Activated T-helper 1 cell treated with anti-CD3 and anti-CD28 coated beads, Interleukin-12 subunit alpha, Interleukin-12 subunit beta, Interleukin-2, Interleukin-4 antibody, amounts not matched to agents 30 ng/mL and 10 ng/mL and 1 ng/mL, durations not matched to agents 14 hours and 24 hours and 36 hours (primary cell): ENCODE measurements at regions of chr2 and their contacts with region 1.

Region 1: GRCh38 chr2:144516981-144517865 is 2.7 kb downstream of the ZEB2 start:
- DNase-seq: peak; percentile 44
- H3K4me3 Mint-ChIP-seq: no peak overlapping the region
- H3K27ac Mint-ChIP-seq: peak overlapping the region; percentile 100
- H3K4me1 Mint-ChIP-seq: peaks cover 25% of the 10 kb centered on the region
- H3K27me3 Mint-ChIP-seq: peaks cover 43% of the 10 kb centered on the region

Region 2: DNA sequence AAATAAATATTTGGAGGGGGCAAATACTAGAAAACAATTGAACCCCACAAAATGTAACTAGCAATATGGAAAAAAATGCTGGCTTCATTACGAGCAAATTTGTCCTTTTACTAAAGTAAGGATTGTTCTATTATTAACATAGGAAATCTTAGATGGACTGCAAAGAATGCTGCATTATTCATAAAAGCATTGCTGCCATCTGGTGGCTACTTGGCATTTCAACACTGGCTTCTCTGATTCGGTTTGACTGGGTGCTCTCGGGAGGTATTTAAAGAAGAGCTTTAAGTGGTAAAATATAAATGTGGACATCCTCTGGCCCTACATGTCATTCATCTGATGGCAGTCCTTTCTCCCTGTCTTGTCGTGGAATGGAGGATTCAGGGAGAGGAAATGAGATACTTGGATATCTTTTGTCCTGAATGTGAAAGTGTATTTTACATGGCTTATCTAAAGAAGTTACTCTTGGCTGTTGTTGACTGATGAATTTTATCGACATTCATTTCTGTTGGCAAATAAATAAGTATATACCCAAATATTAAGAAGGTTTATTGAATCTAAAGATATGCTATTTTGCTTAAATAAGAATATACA is 1257.8 kb before region 1 on chr2:
- intact Hi-C with region 1: loop called (anchors 5 kb)
- DNase-seq: peak; percentile 64
- H3K4me3 Mint-ChIP-seq: peak overlapping the region; percentile 78
- H3K27ac Mint-ChIP-seq: peak overlapping the region; percentile 97
- H3K4me1 Mint-ChIP-seq: peaks cover 85% of the 10 kb centered on the region
- H3K27me3 Mint-ChIP-seq: no peaks in the 10 kb centered on the region

Region 3: DNA sequence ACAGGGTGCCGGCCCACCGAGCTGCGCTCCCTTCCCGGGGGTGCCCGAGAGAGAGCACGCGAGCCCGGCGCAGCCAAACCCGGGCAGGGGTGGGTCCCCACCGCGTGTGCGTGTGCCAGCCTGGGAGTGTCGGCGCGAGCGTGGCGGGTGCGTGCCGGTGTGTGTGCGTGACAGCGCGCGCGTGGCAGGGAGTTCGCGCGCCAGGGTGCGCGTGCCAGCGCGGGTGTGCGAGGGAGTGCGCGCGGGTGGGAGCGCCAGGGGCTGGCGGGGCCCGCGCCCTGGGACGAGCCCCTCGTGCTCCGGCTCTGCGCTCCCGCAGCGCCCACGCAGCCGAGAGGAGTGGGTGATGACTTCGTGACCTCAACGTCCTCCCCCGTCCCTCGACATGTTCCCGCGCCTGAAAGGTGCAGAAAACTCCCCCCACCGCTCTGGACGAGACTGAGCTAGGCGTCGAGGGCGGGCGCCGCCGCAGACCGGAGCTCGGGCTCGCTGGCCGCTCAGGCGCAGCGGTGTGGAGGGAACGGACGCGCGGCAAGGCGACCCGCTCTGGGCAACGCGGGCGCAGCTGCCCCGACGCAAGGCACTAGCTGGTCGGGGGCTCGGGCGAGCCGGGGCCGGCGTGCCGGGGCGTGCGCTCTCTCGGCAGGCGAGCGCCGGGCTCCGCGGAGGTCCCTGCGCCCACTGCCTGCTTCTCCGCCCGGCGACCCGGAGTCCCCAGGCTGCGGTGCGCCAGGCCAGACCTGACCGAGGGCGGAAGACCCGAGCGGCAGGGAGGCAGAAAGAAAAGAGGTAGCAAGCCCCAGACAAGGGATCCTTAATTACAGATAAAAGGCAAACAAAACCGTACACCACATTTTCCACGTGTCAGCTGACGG is 580.1 kb before region 1 on chr2:
- intact Hi-C with region 1: loop called (anchors 2 kb)
- DNase-seq: no peak
- H3K4me3 Mint-ChIP-seq: peak overlapping the region; percentile 70
- H3K27ac Mint-ChIP-seq: no peak overlapping the region
- H3K4me1 Mint-ChIP-seq: peaks cover 14% of the 10 kb centered on the region
- H3K27me3 Mint-ChIP-seq: peaks cover 68% of the 10 kb centered on the region

Region 4: DNA sequence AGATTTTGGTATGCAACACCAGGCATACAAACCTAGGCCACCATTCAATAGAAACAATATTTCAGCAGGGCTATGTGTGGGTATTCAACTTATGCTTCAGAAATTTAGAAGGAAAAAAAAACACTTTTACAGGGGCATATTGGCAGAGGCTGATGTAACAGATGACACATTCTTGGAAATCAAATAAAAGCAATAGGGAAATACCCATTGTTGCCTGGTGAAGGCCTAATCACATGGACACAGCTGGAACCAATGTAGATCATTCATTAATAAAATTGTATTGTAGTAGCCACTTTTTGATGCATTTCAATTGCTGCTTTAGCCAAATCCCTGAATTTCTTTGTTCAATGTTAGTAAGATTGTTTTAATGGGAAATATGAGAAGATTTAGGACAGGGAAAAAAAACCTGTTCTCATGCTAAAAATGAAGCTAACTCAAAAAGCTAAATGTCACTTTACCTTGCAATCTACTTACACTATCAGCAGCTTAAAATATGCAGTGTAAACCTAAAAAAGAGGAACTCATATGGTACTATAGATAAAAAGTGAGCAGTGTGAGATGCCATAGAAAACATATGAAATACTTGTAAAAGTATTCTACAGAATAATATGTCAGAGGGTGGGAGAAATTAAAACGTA is 286.7 kb before region 1 on chr2:
- intact Hi-C with region 1: no loop called
- DNase-seq: no peak
- H3K4me3 Mint-ChIP-seq: no peak overlapping the region
- H3K27ac Mint-ChIP-seq: no peak overlapping the region
- H3K4me1 Mint-ChIP-seq: peaks cover 58% of the 10 kb centered on the region
- H3K27me3 Mint-ChIP-seq: no peaks in the 10 kb centered on the region

Region 5: GRCh38 chr2:144332356-144333142 is 184.7 kb before region 1 on chr2:
- intact Hi-C with region 1: loop called (anchors 1 kb)
- DNase-seq: peak; percentile 91
- H3K4me3 Mint-ChIP-seq: peak overlapping the region; percentile 85
- H3K27ac Mint-ChIP-seq: peak overlapping the region; percentile 98
- H3K4me1 Mint-ChIP-seq: peaks cover 48% of the 10 kb centered on the region
- H3K27me3 Mint-ChIP-seq: no peaks in the 10 kb centered on the region

Region 6: DNA sequence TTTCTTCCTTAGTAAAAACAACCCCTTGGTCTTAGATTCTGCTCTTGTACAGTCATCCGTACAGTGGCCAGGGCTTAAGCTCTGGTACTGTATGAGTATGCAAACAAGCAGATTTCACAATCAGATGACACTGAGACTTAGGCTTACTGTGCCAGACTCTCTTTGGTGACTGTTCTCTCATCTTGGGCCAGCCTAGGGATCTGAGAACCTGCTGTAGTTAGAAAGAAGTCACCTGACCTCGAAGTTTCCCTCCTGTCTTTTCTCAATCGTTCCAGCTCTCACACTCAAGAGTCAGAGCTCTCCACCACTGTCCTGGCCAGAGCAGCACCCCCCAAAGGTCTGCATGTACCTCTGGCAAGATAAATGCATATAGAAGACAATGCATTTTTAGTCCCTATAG is 60.5 kb before region 1 on chr2:
- intact Hi-C with region 1: loop called (anchors 1 kb)
- DNase-seq: no peak
- H3K4me3 Mint-ChIP-seq: no peak overlapping the region
- H3K27ac Mint-ChIP-seq: no peak overlapping the region
- H3K4me1 Mint-ChIP-seq: peaks cover 78% of the 10 kb centered on the region
- H3K27me3 Mint-ChIP-seq: peaks cover 13% of the 10 kb centered on the region

Region 7: GRCh38 chr2:144548532-144549191 is 31.4 kb after region 1 on chr2:
- intact Hi-C with region 1: loop called (anchors 1 kb)
- DNase-seq: no peak
- H3K4me3 Mint-ChIP-seq: no peak overlapping the region
- H3K27ac Mint-ChIP-seq: no peak overlapping the region
- H3K4me1 Mint-ChIP-seq: peaks cover 6% of the 10 kb centered on the region
- H3K27me3 Mint-ChIP-seq: peaks cover 8% of the 10 kb centered on the region